Naive thymus-derived CD4-positive, alpha-beta T cell (primary cell): ENCODE measurements at regions of chr22 and their contacts with region 1.

Region 1: GRCh38 chr22:28019881-28020871 is 101.1 kb upstream of the PITPNB start:
- DNase-seq: peak; percentile 27 to 69 (median 61)
- ATAC-seq: peak; percentile 81
- H3K4me3 ChIP-seq: no peak overlapping the region
- H3K4me3 Mint-ChIP-seq: no peak overlapping the region
- H3K27ac ChIP-seq: no peak overlapping the region
- H3K27ac Mint-ChIP-seq: no peak overlapping the region
- H3K4me1 ChIP-seq: no peaks in the 10 kb centered on the region
- H3K4me1 Mint-ChIP-seq: peaks cover 0 to 8% (median 0%) of the 10 kb centered on the region in 7 donors
- H3K27me3 ChIP-seq: no peaks in the 10 kb centered on the region
- H3K27me3 Mint-ChIP-seq: no peaks in the 10 kb centered on the region

Region 2: DNA sequence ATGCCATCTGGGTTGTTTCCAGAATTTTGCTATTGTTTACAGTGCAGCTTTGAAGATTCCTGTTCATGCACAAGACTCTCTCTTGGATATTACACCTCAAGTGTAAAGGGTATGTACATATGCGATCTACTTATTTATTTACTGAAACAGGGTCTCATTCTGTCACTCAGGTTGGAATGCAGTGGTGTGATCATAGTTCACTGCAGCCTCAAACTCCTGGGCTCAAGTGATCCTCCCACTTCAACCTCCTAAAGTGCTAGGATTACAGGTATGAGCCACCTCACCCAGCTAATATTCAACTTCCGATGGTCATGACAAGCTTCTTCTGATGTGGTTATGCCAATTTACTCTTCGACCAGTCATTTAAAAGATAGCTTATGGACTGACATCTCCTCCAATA is 57.0 kb after region 1 on chr22:
- CTCF ChIA-PET with region 1: interaction called, 11 read pairs
- POLR2A ChIA-PET with region 1: no interaction called
- intact Hi-C with region 1: no loop called
- DNase-seq: no peak
- ATAC-seq: no peak
- H3K4me3 ChIP-seq: no peak overlapping the region
- H3K4me3 Mint-ChIP-seq: no peak overlapping the region
- H3K27ac ChIP-seq: no peak overlapping the region
- H3K27ac Mint-ChIP-seq: no peak overlapping the region
- H3K4me1 ChIP-seq: no peaks in the 10 kb centered on the region
- H3K4me1 Mint-ChIP-seq: no peaks in the 10 kb centered on the region
- H3K27me3 ChIP-seq: no peaks in the 10 kb centered on the region
- H3K27me3 Mint-ChIP-seq: peaks cover 0 to 5% (median 0%) of the 10 kb centered on the region in 5 donors